ENCODE measurements at regions of chr10 and their contacts with region 1.

Region 1: GRCh38 chr10:122342293-122343134 is 32.0 kb upstream of the PLEKHA1 start:
- DNase-seq: peak; percentile 20
- H3K4me3 ChIP-seq: no peak overlapping the region
- H3K27ac ChIP-seq: no peak overlapping the region
- H3K27me3 ChIP-seq: peaks cover 5% of the 10 kb centered on the region
- CTCF ChIP-seq: peak; percentile 85

Region 2: DNA sequence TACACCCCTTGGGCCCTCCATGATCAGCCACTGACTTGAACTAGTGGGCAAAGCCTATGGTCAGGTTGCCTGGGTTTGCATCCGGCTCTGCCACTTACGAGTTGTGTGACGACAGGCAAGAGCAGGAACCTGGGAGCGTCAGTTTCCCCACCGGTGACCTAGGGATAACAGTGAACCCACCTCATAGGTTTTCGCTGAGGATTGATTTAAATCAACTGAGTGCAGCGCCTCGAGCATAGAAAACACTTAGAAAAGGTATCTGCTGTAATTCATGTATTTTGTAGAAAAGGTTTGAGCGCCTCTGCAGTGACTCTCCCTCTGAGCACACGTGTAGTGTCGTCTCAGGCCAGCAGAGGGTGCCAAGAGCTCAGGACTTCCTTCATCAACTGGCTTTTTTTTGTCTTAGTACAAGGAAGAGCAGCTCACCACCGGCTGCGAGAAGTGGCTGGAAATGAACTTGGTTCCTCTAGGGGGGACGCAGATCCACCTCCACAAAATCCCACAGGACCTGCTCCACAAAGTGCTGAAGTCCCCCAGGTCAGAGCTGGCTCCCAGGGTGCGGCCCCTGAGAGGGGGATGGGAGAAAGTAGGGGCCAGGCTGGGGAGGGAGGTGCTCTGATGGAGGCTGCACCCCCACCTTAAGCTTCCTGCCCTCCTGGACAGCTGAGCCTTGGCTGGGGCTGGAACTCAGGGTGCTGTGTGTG is 43.8 kb before region 1 on chr10:
- CTCF ChIA-PET with region 1: interaction called, 12 read pairs
- POLR2A ChIA-PET with region 1: no interaction called
- DNase-seq: peak; percentile 58
- H3K4me3 ChIP-seq: peak overlapping the region; percentile 48
- H3K27ac ChIP-seq: no peak overlapping the region
- H3K27me3 ChIP-seq: peaks cover 18% of the 10 kb centered on the region
- CTCF ChIP-seq: peak; percentile 94

Region 3: GRCh38 chr10:122307669-122308486 is 34.6 kb before region 1 on chr10:
- CTCF ChIA-PET with region 1: interaction called, 10 read pairs
- POLR2A ChIA-PET with region 1: no interaction called
- DNase-seq: peak; percentile 76
- H3K4me3 ChIP-seq: peak overlapping the region; percentile 32
- H3K27ac ChIP-seq: peak overlapping the region; percentile 83
- H3K27me3 ChIP-seq: no peaks in the 10 kb centered on the region
- CTCF ChIP-seq: no peak

Region 4: GRCh38 chr10:122357685-122358084 is 15.2 kb after region 1 on chr10:
- CTCF ChIA-PET with region 1: interaction called, 18 read pairs
- POLR2A ChIA-PET with region 1: no interaction called
- DNase-seq: no peak
- H3K4me3 ChIP-seq: no peak overlapping the region
- H3K27ac ChIP-seq: peak overlapping the region; percentile 2
- H3K27me3 ChIP-seq: peaks cover 5% of the 10 kb centered on the region
- CTCF ChIP-seq: no peak

Region 5: GRCh38 chr10:122374237-122374869 is 31.8 kb after region 1 on chr10 and contains the start of gene PLEKHA1:
- CTCF ChIA-PET with region 1: interaction called, 10 read pairs
- POLR2A ChIA-PET with region 1: interaction called, 4 read pairs
- DNase-seq: peak; percentile 80
- H3K4me3 ChIP-seq: peak within 1 kb of the TSS; percentile 86
- H3K27ac ChIP-seq: no peak within 1 kb of the TSS
- H3K27me3 ChIP-seq: peaks cover 7% of the 10 kb centered on the region
- CTCF ChIP-seq: no peak
- polyA plus RNA-seq, gene PLEKHA1: 17.6 and 25.5 TPM in 2 replicates

Region 6: DNA sequence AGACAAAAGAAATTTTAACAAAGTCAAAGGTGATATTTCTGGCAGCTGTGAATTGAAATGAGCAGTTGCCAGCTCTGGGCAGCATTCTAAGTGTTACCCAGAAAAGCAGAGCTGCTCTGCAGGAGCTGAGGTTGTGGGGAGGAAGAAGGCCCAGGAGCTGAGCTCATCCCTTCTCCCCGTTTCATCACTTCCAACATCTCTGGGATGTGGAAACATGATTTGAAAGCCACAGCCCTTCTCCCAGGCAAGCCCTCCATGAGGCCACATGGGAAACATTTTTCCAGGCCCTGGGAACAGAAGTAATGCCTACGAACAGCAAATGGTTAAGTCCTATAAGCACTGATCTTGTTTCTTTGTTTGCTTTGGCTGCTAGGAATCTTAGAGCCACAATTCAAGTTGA is 207.1 kb after region 1 on chr10:
- CTCF ChIA-PET with region 1: no interaction called
- POLR2A ChIA-PET with region 1: no interaction called
- DNase-seq: no peak
- H3K4me3 ChIP-seq: no peak overlapping the region
- H3K27ac ChIP-seq: no peak overlapping the region
- H3K27me3 ChIP-seq: no peaks in the 10 kb centered on the region
- CTCF ChIP-seq: no peak